HepG2 (cell line): ENCODE measurements at regions of chr17 and their contacts with region 1.

Region 1: GRCh38 chr17:76671123-76671911 is 27.8 kb upstream of the ST6GALNAC1 start:
- DNase-seq: peak; percentile 100
- ATAC-seq: peak; percentile 93
- H3K4me3 ChIP-seq: peak overlapping the region; percentile 66 to 83 (median 80)
- H3K27ac ChIP-seq: peak overlapping the region; percentile 83
- H3K4me1 ChIP-seq: peaks cover 54% of the 10 kb centered on the region
- H3K27me3 ChIP-seq: no peaks in the 10 kb centered on the region; a peak in 1 of 5 replicates
- CTCF ChIP-seq: peak; percentile 46; the same call in 1 of the 2 replicates
- EP300 ChIP-seq: no peak; a peak in 1 of 4 replicates
- POLR2A ChIP-seq: peak; percentile 80 to 83
- RAD21 ChIP-seq: peak; percentile 34; the same call in 1 of the 2 replicates

Region 2: DNA sequence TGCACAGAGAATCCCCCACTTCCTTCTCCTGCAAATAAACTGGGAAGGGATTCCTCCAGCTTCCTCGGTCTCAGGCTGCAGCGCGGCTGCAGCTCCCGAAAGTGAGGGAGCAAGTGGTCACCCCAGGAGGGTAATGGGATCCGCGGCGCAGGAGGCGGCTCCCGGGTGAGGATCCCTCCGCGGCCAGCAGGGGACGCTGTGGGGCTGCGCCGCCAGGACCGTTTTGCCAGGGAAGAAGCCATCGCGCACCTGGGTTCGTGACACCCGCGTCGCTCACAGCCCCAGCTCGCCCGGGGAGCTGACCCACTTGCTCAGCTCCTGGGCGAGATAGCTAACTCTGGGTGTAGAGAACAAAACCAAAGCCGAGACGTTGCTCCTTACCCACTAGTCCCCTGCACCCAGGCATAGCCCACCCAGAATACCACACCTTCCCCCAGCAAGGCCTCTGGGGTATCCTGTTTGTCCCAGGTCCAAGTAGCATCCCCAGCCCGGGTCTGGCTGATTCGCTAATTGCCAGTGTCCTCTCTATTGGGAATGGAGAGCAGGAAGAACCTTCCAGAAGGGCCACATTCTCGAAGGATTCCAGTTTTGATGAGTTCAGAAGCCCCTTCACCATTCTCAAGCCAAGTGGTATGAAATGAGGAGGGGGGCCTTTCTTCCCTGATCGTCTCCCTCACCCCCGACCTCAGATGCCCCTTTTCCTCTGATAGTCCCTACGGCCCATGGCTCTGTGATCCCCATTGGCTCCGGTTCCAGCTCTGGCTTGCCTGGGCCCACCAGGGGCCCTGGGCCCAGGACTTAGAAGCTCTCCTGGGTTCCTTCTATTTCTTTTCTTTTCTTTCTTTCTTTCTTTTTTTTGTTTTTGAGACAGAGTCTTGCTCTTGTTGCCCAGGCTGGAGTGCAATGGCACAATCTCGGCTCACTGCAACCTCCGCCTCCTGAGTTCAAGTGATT is 148.0 kb before region 1 on chr17:
- CTCF ChIA-PET with region 1: no interaction called
- POLR2A ChIA-PET with region 1: interaction called, 8 read pairs
- in situ Hi-C with region 1: no loop called
- intact Hi-C with region 1: loop called (anchors 5 kb)
- DNase-seq: peak; percentile 53
- ATAC-seq: peak; percentile 58
- H3K4me3 ChIP-seq: peak overlapping the region in 1 of 3 experiments; percentile 64; a peak in 2 of 6 replicates
- H3K27ac ChIP-seq: no peak overlapping the region
- H3K4me1 ChIP-seq: peaks cover 85% of the 10 kb centered on the region
- H3K27me3 ChIP-seq: peaks cover 8 to 32% of the 10 kb centered on the region in 2 experiments
- CTCF ChIP-seq: peak; percentile 100
- EP300 ChIP-seq: no peak; a peak in 1 of 4 replicates
- POLR2A ChIP-seq: no peak
- RAD21 ChIP-seq: peak; percentile 100

Region 3: DNA sequence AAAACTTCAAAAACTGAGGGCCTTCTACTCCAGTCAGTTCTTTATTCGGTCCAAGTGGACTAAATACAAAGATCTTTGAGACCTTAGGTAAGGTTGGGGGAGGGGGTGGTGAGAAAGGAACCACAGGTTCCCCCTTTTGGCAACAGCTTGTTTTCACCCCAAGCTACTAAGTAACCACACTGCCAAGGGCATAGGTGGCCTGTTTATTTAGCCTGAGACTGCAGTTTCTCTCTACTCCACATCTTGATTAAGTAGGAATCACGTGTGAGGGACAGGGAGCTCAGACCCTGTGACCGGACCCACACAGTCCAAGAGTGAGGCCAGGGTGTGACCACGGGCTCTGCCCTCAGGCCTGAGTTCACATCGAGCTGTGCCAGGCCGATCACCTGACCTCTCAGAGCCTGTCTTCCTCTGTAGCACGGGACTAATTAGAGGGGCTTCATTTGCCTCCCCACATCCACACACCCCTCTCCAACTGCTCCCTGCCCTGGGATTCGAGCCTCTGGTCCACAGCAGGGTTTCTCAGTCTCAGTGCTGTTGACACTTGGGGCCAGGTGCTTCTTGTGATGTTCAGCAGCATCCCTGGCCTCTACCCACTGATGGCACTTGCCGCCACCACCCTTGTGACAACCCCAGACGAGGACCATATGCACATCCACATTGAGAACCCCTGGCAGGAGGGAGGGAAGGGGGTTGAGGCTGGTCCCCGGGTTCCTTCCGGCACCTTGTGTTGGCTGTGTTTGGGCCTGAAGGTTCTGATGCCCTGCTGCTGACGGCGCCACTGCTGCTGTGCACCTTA is 103.5 kb before region 1 on chr17:
- CTCF ChIA-PET with region 1: no interaction called
- POLR2A ChIA-PET with region 1: interaction called, 13 read pairs
- in situ Hi-C with region 1: no loop called
- intact Hi-C with region 1: no loop called
- DNase-seq: peak; percentile 60
- ATAC-seq: peak; percentile 45
- H3K4me3 ChIP-seq: no peak overlapping the region
- H3K27ac ChIP-seq: peak overlapping the region; percentile 45
- H3K4me1 ChIP-seq: peaks cover 75% of the 10 kb centered on the region
- H3K27me3 ChIP-seq: no peaks in the 10 kb centered on the region
- CTCF ChIP-seq: no peak
- EP300 ChIP-seq: no peak
- POLR2A ChIP-seq: peak in 1 of 2 experiments; percentile 30
- RAD21 ChIP-seq: peak; percentile 7; the same call in 1 of the 2 replicates

Region 4: GRCh38 chr17:76612977-76613851 is 58.1 kb before region 1 on chr17:
- CTCF ChIA-PET with region 1: no interaction called
- POLR2A ChIA-PET with region 1: interaction called, 22 read pairs
- in situ Hi-C with region 1: no loop called
- intact Hi-C with region 1: no loop called
- DNase-seq: peak; percentile 94
- ATAC-seq: peak; percentile 95
- H3K4me3 ChIP-seq: peak overlapping the region; percentile 17 to 70 (median 32)
- H3K27ac ChIP-seq: peak overlapping the region; percentile 57
- H3K4me1 ChIP-seq: peaks cover 34% of the 10 kb centered on the region
- H3K27me3 ChIP-seq: peaks cover 0 to 6% of the 10 kb centered on the region in 2 experiments; a peak in 1 of 5 replicates
- CTCF ChIP-seq: peak; percentile 71
- EP300 ChIP-seq: no peak
- POLR2A ChIP-seq: no peak
- RAD21 ChIP-seq: peak; percentile 57

Region 5: DNA sequence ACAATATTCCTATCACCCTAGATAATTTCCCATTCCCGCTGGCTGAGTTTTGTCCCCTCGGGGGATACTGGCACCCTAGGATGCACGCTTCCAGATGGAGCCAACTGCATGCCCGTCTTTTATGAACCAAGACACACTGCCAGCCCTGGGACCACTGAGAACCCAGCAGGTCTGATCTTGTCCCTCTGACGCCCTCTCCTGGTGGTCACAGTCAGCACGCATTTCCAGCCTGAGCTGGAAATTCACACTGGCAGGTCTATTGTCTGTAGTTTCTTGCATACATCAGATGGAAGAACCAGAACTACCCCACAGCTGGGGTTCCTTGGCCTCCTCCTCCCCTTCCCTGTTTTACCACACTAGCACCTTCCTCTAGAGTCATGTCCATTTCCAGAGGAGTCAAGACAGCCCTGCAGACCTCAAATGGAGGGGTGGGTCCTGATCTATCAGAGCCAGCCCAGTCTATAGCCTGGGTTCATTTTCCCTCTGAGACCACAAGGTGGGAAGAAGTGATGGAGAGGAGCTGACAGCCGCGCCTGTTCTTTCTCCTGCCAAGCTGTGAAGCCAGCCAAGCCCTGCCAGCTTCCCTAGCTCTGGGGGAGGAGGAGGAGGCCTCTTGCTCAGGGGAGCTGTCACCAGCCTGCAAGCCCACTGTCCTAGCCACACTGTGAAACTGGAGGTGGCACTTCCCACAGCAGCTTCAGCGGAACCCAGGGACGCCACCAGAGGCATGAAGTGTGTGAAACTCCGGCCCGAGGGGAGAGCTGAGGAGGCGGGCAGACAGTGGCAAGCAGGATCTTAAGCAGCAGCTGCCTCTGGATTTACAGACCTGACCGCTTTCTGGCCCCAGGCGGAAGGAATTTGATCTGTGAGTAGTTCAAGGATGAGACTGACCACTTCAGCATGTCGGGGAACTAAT is 10.2 kb after region 1 on chr17:
- CTCF ChIA-PET with region 1: no interaction called
- POLR2A ChIA-PET with region 1: interaction called, 23 read pairs
- in situ Hi-C with region 1: no loop called
- intact Hi-C with region 1: no loop called
- DNase-seq: peak; percentile 58
- ATAC-seq: peak; percentile 56
- H3K4me3 ChIP-seq: no peak overlapping the region
- H3K27ac ChIP-seq: no peak overlapping the region
- H3K4me1 ChIP-seq: peaks cover 26% of the 10 kb centered on the region
- H3K27me3 ChIP-seq: no peaks in the 10 kb centered on the region
- CTCF ChIP-seq: peak; percentile 94
- EP300 ChIP-seq: no peak
- POLR2A ChIP-seq: no peak
- RAD21 ChIP-seq: peak; percentile 85

Region 6: GRCh38 chr17:76714822-76715495 is 43.6 kb after region 1 on chr17:
- CTCF ChIA-PET with region 1: no interaction called
- POLR2A ChIA-PET with region 1: interaction called, 9 read pairs
- in situ Hi-C with region 1: no loop called
- intact Hi-C with region 1: loop called (anchors 2 kb)
- DNase-seq: no peak
- ATAC-seq: peak; percentile 14; the same call in 2 of the 3 replicates
- H3K4me3 ChIP-seq: no peak overlapping the region
- H3K27ac ChIP-seq: no peak overlapping the region
- H3K4me1 ChIP-seq: peaks cover 22% of the 10 kb centered on the region
- H3K27me3 ChIP-seq: no peaks in the 10 kb centered on the region
- CTCF ChIP-seq: peak; percentile 84
- EP300 ChIP-seq: no peak
- POLR2A ChIP-seq: no peak
- RAD21 ChIP-seq: peak; percentile 59; the same call in 1 of the 2 replicates

Region 7: GRCh38 chr17:76872221-76872873 is 201.0 kb after region 1 on chr17:
- CTCF ChIA-PET with region 1: no interaction called
- POLR2A ChIA-PET with region 1: no interaction called
- in situ Hi-C with region 1: no loop called
- intact Hi-C with region 1: no loop called
- DNase-seq: no peak
- ATAC-seq: no peak
- H3K4me3 ChIP-seq: no peak overlapping the region
- H3K27ac ChIP-seq: no peak overlapping the region
- H3K4me1 ChIP-seq: no peaks in the 10 kb centered on the region
- H3K27me3 ChIP-seq: peaks cover 20 to 47% of the 10 kb centered on the region in 2 experiments
- CTCF ChIP-seq: no peak
- EP300 ChIP-seq: no peak
- POLR2A ChIP-seq: no peak
- RAD21 ChIP-seq: no peak